Mammary epithelial cell (primary cell): ENCODE measurements at regions of chr10 and their contacts with region 1.

Region 1: GRCh38 chr10:96229568-96230030 is 41.8 kb downstream of the BLNK start:
- DNase-seq: peak; percentile 66
- H3K4me3 ChIP-seq: no peak overlapping the region
- H3K27ac ChIP-seq: no peak overlapping the region
- H3K4me1 ChIP-seq: no peaks in the 10 kb centered on the region
- H3K27me3 ChIP-seq: no peaks in the 10 kb centered on the region
- CTCF ChIP-seq: peak; percentile 95 to 97

Region 2: DNA sequence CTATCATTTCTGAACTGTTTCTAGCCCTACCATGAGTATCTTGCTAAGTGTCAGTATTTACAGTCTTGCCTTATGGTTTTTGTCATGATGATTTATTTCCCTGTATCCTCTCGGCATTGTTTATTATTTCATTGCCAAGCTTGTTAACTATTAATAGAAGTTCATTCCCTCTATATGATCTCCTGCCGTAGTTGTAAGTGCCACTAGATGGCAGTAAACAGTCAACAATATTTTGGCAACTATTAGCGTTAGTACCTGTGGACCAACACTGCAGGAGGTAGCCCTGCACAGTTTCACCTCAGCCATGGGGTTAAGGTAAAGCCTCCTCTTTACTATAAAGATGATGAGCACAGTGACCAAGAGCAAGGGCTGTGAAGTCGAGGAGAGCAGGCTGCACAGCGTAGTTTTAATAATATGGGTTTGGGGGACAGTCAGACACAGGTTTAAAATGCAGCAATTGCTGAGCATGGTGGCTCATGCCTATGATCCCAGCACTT is 212.4 kb before region 1 on chr10:
- CTCF ChIA-PET with region 1: no interaction called
- dilution Hi-C with region 1: no loop called
- in situ Hi-C with region 1: no loop called
- intact Hi-C with region 1: loop called (anchors 1 kb)
- DNase-seq: peak; percentile 52
- H3K4me3 ChIP-seq: no peak overlapping the region
- H3K27ac ChIP-seq: no peak overlapping the region
- H3K4me1 ChIP-seq: no peaks in the 10 kb centered on the region
- H3K27me3 ChIP-seq: peaks cover 7% of the 10 kb centered on the region
- CTCF ChIP-seq: peak; percentile 73 to 75

Region 3: DNA sequence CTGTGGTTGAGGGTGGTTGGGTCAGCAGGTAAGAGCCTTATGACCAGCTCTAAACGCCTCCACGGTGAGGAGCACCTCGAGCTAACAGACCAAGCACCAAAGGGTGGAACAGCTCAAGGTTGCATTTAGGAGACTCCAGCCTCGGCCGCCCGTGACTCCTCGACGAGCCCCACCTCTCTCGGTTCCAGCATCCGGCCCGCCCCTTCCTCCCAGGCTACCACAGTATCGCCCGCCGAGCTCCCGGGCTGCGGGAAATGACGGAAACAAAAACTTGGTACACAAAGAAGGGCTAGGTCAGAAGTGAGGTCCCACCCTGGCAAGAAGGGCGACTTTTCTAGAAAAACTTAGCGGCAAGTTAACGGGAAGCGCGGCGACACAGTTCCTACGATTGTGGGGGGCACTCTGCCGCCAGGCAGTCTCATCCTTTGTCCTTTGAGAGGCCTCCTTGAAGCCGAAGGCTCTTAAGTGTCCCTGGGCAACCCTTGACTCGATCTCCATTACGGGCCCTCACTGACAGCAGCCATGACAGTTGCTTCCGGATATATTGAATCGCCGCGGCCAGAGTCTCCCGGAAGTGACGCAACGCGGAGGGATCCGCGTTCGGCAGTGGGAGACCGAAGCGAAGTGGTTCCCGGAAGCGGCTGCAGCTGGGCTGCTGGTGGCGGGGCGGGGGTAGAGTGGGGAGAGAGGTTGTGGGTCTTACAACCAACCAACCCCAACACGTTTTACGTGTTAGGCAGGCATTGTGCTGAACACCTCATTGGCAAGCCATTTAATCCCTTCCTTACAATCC is 139.7 kb before region 1 on chr10:
- CTCF ChIA-PET with region 1: no interaction called
- dilution Hi-C with region 1: no loop called
- in situ Hi-C with region 1: no loop called
- intact Hi-C with region 1: loop called (anchors 1 kb)
- DNase-seq: peak; percentile 93
- H3K4me3 ChIP-seq: peak overlapping the region; percentile 59 to 89 (median 69)
- H3K27ac ChIP-seq: peak overlapping the region; percentile 95
- H3K4me1 ChIP-seq: peaks cover 3% of the 10 kb centered on the region
- H3K27me3 ChIP-seq: no peaks in the 10 kb centered on the region
- CTCF ChIP-seq: no peak

Region 4: GRCh38 chr10:96153070-96153469 is 76.5 kb before region 1 on chr10:
- CTCF ChIA-PET with region 1: no interaction called
- dilution Hi-C with region 1: no loop called
- in situ Hi-C with region 1: no loop called
- intact Hi-C with region 1: no loop called
- DNase-seq: no peak
- H3K4me3 ChIP-seq: no peak overlapping the region
- H3K27ac ChIP-seq: no peak overlapping the region
- H3K4me1 ChIP-seq: no peaks in the 10 kb centered on the region
- H3K27me3 ChIP-seq: no peaks in the 10 kb centered on the region
- CTCF ChIP-seq: no peak

Region 5: GRCh38 chr10:96292971-96293920 is 63.6 kb after region 1 on chr10:
- CTCF ChIA-PET with region 1: interaction called, 27 read pairs
- dilution Hi-C with region 1: no loop called
- in situ Hi-C with region 1: loop called (anchors 5 kb)
- intact Hi-C with region 1: loop called (anchors 1 kb)
- DNase-seq: peak; percentile 41
- H3K4me3 ChIP-seq: no peak overlapping the region
- H3K27ac ChIP-seq: no peak overlapping the region
- H3K4me1 ChIP-seq: peaks cover 1% of the 10 kb centered on the region
- H3K27me3 ChIP-seq: no peaks in the 10 kb centered on the region
- CTCF ChIP-seq: peak; percentile 47 to 66

Region 6: GRCh38 chr10:96339957-96340904 is 110.6 kb after region 1 on chr10:
- CTCF ChIA-PET with region 1: no interaction called
- dilution Hi-C with region 1: no loop called
- in situ Hi-C with region 1: no loop called
- intact Hi-C with region 1: loop called (anchors 2 kb)
- DNase-seq: peak; percentile 54
- H3K4me3 ChIP-seq: no peak overlapping the region
- H3K27ac ChIP-seq: no peak overlapping the region
- H3K4me1 ChIP-seq: no peaks in the 10 kb centered on the region
- H3K27me3 ChIP-seq: no peaks in the 10 kb centered on the region
- CTCF ChIP-seq: peak; percentile 84 to 89

Region 7: DNA sequence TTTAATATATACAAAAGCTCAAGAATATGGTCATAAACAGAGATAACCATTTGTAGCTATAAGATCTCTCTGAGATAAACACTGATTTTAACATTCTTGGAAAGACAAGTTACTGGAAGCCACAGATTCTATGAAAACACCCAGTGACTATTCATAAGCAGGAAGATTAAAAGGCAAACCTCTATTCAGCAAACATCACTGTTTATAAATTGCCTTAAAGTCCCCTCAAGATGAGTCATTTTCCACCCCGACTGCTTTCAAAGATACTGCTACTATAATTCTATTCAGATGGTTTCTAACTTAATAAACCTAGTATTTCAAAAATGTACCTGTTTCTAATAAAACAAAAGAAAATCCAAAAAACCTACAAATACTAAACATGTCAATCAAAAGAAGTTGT is 336.2 kb after region 1 on chr10:
- CTCF ChIA-PET with region 1: no interaction called
- dilution Hi-C with region 1: no loop called
- in situ Hi-C with region 1: no loop called
- intact Hi-C with region 1: no loop called
- DNase-seq: no peak
- H3K4me3 ChIP-seq: no peak overlapping the region
- H3K27ac ChIP-seq: no peak overlapping the region
- H3K4me1 ChIP-seq: no peaks in the 10 kb centered on the region
- H3K27me3 ChIP-seq: no peaks in the 10 kb centered on the region
- CTCF ChIP-seq: no peak